ENCODE measurements at regions of chr2 and their contacts with region 1.

Region 1: DNA sequence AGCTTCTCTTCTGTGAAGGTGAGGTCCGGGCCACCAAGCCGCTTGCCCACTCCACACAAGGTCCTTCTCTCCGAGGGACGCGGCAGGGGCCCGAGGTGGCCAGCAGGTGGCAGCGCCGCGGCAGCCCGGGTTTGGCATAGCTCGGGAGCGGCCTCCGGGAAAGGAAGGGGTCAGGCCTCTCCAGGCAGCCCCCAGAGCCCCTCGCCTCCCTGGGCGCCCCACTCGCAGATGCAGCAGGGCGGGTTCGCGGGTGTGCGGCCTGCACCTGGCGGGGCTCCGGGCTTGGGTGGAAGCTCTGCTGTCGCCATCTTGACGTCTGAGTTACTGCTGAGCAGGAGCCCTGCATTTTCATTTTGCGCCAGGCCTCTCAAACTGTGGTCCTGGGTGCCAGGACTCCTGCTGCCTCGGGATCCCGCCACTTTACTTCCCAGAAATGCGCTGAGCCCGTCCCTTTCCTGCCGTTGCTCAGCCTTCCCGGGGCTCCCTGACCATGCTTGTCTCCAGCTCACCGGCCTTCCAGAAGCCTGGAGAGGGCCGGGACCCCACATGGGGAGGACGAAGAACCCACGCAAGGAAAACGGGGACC is 18.6 kb upstream of the NCL start:
- DNase-seq: peak; percentile 89
- CTCF ChIP-seq: peak; percentile 98

Region 2: GRCh38 chr2:231463698-231464575 is 19.0 kb before region 1 on chr2 and contains the start of gene NCL:
- CTCF ChIA-PET with region 1: interaction called, 103 read pairs
- POLR2A ChIA-PET with region 1: interaction called, 14 read pairs
- DNase-seq: peak; percentile 84
- CTCF ChIP-seq: no peak

Region 3: DNA sequence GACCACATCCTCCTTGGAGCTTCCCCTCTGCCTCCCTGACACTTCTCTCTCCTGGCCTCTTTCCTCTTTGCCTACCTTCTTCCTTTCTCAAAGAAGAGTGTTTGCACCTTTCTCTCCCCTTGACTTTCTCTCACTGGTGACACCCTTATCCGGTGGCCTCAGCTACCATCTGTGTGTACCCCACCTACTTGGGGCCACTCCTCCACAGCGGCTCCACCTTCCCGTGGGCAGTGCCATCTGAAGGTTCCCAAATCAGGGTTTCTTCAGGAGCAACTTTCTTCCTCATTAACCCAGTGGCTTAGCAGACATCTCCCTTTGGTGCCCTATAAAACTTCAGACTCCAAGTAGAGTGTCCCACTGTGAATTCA is 13.3 kb before region 1 on chr2:
- CTCF ChIA-PET with region 1: interaction called, 103 read pairs
- POLR2A ChIA-PET with region 1: interaction called, 14 read pairs
- DNase-seq: no peak
- CTCF ChIP-seq: no peak

Region 4: GRCh38 chr2:231497651-231498050 is 14.8 kb after region 1 on chr2:
- CTCF ChIA-PET with region 1: interaction called, 36 read pairs
- POLR2A ChIA-PET with region 1: no interaction called
- DNase-seq: no peak
- CTCF ChIP-seq: no peak

Region 5: DNA sequence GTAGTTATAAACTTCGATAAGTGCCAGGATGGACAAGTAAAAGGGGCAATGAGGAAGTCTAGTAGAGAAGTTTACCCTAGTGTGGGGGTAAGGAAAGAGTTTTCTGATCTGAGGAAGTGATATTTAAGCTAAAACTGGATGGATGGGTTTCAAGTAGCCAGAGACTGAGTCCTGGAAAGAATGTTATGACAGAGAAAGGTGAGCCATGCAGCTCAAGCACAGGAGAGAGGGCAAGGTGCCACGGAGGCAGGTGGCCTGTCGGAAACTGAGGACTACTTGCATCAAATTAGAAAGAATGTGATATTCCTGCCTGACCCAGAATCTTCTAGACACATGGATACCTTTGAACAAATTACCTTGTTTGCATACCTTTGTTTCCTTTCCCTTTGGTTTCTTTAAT is 20.9 kb after region 1 on chr2:
- CTCF ChIA-PET with region 1: interaction called, 26 read pairs
- POLR2A ChIA-PET with region 1: no interaction called
- DNase-seq: no peak
- CTCF ChIP-seq: no peak

Region 6: DNA sequence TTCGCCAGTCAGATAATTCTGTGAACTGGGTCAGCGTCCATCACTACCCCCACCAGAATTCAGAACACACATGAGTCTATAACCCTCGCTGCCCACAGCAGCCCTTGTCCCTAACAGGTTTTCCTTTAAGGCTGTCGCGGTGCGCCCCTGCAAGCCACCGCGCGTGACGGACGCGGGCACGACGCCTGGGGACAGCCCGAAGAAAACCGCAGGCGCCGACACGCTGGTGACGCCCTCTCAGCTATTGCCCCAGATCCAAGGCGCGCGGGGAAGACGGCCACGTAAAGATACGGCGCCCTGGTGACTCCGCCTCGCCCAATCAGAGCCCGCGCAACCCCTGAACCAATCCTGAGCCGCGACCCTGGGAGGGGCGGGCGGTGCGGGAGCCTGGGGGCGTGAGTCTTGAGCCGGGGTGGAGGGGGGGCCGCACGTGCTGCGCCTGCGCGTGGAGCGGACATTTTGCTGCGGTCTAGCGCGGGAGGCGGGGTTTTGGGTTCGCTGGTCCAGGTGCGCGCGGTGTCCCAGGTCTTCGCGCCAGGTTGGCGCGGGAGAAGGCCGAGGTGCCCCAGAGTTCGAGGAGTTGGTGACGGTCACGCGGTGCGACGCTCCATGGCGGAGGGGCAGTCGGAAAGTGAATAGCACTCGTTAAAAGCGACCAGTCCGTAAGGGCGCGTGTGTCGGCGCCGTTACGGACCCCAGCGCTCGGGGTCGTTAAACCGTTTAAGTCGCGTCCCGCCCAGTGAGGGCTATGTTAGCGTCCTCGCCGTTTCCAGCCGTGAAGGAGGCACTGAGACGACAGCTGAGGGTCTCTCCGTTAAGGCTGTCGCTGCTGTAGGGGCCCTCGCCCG is 31.4 kb after region 1 on chr2:
- CTCF ChIA-PET with region 1: interaction called, 26 read pairs
- POLR2A ChIA-PET with region 1: no interaction called
- DNase-seq: peak; percentile 100
- CTCF ChIP-seq: no peak

Region 7: GRCh38 chr2:232013701-232014353 is 530.9 kb after region 1 on chr2:
- CTCF ChIA-PET with region 1: no interaction called
- POLR2A ChIA-PET with region 1: no interaction called
- DNase-seq: no peak
- CTCF ChIP-seq: no peak

Measured in GM10248 (cell line).